ENCODE measurements at regions of chr6 and their contacts with region 1.

Region 1: DNA sequence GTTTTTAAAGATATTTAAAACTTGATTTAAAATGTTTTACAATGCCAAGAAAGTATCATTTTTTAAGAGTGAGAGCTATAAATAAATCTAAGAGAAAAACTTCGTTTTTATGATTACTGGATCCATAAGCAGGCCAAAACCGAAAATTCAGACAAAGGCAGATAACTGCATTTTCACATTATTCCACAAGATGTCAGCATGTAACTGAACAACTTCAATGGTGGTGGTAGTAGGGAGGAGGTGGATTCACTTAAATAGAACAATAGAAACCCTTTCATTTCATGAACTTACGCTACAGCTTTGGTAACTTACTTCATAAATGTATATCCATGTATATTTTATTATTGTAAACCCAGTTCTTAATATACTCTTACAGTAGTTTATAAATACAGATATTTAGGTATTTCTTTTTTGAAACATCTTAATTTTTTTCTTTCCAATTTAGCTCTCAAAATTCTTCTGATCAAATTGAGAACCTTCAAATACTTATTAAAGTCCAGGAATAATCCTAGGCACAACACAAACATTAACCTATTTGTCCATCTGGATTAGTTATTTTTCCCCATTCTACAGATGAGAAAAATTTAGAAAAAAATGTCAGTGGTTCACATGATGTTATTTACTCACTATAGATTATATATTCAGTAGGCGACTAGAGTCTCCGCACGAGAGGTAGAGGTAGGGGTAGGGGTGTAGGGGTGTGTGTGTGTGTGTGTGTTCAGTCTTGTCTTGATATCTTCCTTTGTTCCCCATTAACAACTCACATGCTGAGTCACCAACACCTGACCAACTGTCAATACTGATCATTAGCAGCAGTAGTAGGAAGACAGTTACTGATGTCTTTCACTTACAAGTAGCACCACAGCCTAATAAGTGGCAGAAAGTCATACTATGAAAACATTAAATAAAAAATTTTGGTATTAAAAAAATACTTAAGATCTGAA is 111.5 kb downstream of the ARHGAP18 start:
- DNase-seq: peak; percentile 35
- ATAC-seq: peak; percentile 79
- H3K4me3 Mint-ChIP-seq: no peak overlapping the region
- H3K27ac Mint-ChIP-seq: no peak overlapping the region
- H3K4me1 Mint-ChIP-seq: peaks cover 5% of the 10 kb centered on the region
- H3K27me3 Mint-ChIP-seq: no peaks in the 10 kb centered on the region

Region 2: GRCh38 chr6:129498950-129499842 is 99.3 kb before region 1 on chr6:
- CTCF ChIA-PET with region 1: interaction called, 44 read pairs
- POLR2A ChIA-PET with region 1: no interaction called
- DNase-seq: peak; percentile 39
- ATAC-seq: peak; percentile 60
- H3K4me3 Mint-ChIP-seq: peak overlapping the region; percentile 0
- H3K27ac Mint-ChIP-seq: peak overlapping the region; percentile 8
- H3K4me1 Mint-ChIP-seq: peaks cover 29% of the 10 kb centered on the region
- H3K27me3 Mint-ChIP-seq: no peaks in the 10 kb centered on the region

Region 3: DNA sequence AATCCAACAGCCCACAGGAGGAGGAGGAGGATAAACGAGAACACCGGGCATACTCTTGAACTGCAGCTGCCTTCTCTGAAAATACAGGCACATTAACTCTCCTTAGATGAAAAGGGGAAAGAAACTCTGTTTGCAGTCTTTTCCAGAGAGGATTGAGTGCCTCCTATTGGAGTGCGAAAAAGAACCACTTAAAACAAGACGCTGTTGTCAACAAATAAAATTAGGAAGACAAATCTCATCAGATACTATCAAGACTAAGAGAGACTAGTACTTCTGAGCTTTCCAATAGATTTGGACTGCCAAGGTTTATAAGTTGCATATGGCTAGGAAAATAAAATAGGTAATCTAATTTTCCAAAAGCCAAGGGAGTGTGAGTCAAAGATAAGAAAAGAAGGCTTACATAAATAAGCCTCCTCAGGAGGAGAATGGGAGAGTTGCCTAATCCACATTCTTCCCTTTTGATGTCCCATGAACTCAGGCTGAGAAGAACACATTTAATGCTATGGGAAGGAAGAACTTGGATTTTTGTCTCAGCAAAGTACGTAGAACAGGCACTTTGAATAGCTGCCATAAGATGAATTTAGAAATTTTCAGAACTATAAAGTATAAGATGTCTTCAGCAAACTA is 43.2 kb before region 1 on chr6:
- CTCF ChIA-PET with region 1: no interaction called
- POLR2A ChIA-PET with region 1: no interaction called
- DNase-seq: no peak
- ATAC-seq: no peak
- H3K4me3 Mint-ChIP-seq: no peak overlapping the region
- H3K27ac Mint-ChIP-seq: no peak overlapping the region
- H3K4me1 Mint-ChIP-seq: no peaks in the 10 kb centered on the region
- H3K27me3 Mint-ChIP-seq: peaks cover 7% of the 10 kb centered on the region

Region 4: GRCh38 chr6:129709769-129710449 is 111.4 kb after region 1 on chr6 and contains the start of gene ARHGAP18:
- CTCF ChIA-PET with region 1: interaction called, 11 read pairs
- POLR2A ChIA-PET with region 1: no interaction called
- DNase-seq: peak; percentile 83
- ATAC-seq: peak; percentile 98
- H3K4me3 Mint-ChIP-seq: peak within 1 kb of the TSS; percentile 96
- H3K27ac Mint-ChIP-seq: peak within 1 kb of the TSS; percentile 86
- H3K4me1 Mint-ChIP-seq: peaks cover 48% of the 10 kb centered on the region
- H3K27me3 Mint-ChIP-seq: no peaks in the 10 kb centered on the region
- total RNA-seq, gene ARHGAP18: 11.9 to 12.1 TPM

Region 5: GRCh38 chr6:129730477-129731165 is 132.1 kb after region 1 on chr6:
- CTCF ChIA-PET with region 1: interaction called, 152 read pairs
- POLR2A ChIA-PET with region 1: interaction called, 3 read pairs
- DNase-seq: peak; percentile 55
- ATAC-seq: peak; percentile 51
- H3K4me3 Mint-ChIP-seq: no peak overlapping the region
- H3K27ac Mint-ChIP-seq: no peak overlapping the region
- H3K4me1 Mint-ChIP-seq: peaks cover 12% of the 10 kb centered on the region
- H3K27me3 Mint-ChIP-seq: no peaks in the 10 kb centered on the region

Region 6: GRCh38 chr6:129748212-129748900 is 149.8 kb after region 1 on chr6:
- CTCF ChIA-PET with region 1: interaction called, 40 read pairs
- POLR2A ChIA-PET with region 1: no interaction called
- DNase-seq: peak; percentile 77
- ATAC-seq: peak; percentile 94
- H3K4me3 Mint-ChIP-seq: peak overlapping the region; percentile 60
- H3K27ac Mint-ChIP-seq: peak overlapping the region; percentile 91
- H3K4me1 Mint-ChIP-seq: peaks cover 57% of the 10 kb centered on the region
- H3K27me3 Mint-ChIP-seq: no peaks in the 10 kb centered on the region

Region 7: GRCh38 chr6:129766959-129767728 is 168.6 kb after region 1 on chr6:
- CTCF ChIA-PET with region 1: interaction called, 17 read pairs
- POLR2A ChIA-PET with region 1: no interaction called
- DNase-seq: peak; percentile 77
- ATAC-seq: peak; percentile 88
- H3K4me3 Mint-ChIP-seq: peak overlapping the region; percentile 79
- H3K27ac Mint-ChIP-seq: peak overlapping the region; percentile 48
- H3K4me1 Mint-ChIP-seq: peaks cover 25% of the 10 kb centered on the region
- H3K27me3 Mint-ChIP-seq: peaks cover 41% of the 10 kb centered on the region

Region 8: DNA sequence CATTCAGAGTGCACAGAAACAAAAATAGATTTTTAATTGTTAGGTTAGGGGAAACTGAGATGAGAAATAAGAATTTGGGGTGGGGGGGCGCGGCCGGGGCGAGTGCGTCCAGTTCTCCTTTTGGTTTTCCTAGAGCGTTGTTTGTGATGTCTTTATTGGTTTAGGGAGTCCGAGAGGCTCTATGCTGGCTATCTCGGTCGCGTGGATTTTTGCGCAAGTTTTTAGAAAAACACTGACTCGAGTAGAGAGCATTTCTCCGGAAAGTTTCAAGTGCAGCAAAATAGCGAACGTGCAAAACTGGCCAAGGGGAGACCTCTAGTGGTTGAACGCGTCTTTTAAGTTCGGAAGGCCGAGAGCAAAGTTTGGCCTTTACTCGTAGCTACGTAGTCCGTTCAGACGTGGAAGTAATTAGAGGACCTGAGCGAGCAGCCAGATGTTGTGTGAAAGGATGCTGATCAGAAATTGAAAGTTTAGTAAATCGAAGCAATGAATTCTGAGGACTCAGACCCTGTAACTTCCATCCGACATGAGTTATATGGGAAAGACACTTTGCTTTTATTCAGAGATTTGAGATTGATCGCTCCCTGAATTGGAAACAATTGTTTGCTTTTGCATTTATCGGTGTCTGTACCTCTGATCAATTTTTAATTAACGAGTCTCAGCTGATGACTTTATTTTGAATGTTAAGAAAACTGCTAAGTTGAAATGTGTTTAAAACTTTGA is 422.6 kb after region 1 on chr6:
- CTCF ChIA-PET with region 1: interaction called, 14 read pairs
- POLR2A ChIA-PET with region 1: no interaction called
- DNase-seq: peak; percentile 91
- ATAC-seq: peak; percentile 62
- H3K4me3 Mint-ChIP-seq: peak overlapping the region; percentile 96
- H3K27ac Mint-ChIP-seq: peak overlapping the region; percentile 98
- H3K4me1 Mint-ChIP-seq: peaks cover 48% of the 10 kb centered on the region
- H3K27me3 Mint-ChIP-seq: no peaks in the 10 kb centered on the region

Measured in activated CD8-positive, alpha-beta T cell treated with anti-CD3 and anti-CD28 coated beads, Interleukin-2, amount 10 ng/mL, durations not matched to agents 7 days and 5 days (primary cell).